CD4-positive, alpha-beta T cell (primary cell): ENCODE measurements at regions of chr11 and their contacts with region 1.

Region 1: DNA sequence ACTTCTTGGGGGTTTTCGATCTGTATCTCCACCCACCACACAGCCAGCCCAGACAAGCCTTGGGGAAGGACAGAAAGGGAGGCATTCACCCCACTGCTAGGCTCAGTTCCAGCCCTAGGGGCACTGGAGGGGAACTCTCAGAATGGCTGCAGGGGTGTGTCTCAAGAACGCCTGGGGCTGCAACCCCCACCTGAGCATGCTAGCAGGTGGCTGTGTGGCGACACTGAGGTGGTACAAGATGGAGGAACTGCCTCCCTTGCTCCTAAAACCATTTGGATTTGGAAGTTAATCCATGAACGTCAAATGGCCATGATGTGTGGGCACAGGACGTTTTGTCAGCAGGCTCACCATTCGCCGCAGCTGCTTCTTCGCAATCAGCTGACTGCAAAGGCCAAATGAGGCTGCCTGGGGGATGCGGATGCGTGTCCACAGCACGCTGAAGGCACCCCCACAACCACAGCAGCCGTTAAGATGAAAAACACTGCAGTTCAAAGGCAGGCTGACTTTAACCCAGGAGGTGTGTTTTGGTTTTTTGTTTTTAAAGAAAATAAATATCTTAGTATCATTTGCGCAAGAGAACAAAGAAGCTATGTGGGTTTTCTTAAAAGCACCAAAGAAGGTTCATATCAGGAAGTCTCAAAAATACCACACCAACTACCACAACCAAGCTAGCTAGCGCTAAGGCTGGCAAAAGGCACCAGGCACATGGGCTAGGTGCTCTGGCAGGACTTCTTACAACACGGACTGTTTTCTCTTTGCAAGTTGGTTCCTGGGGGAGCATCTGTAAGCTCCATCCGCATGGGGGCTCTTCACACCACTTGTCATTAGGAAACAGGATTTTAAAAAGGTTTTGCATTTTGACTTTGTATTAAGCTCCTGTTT is 22.2 kb upstream of the NAP1L4 start:
- DNase-seq: peak; percentile 64 to 92 (median 78)
- ATAC-seq: peak; percentile 86
- H3K4me3 ChIP-seq: peak overlapping the region; percentile 25
- H3K4me3 Mint-ChIP-seq: peak overlapping the region; percentile 66
- H3K27ac ChIP-seq: peak overlapping the region; percentile 21 to 48
- H3K27ac Mint-ChIP-seq: peak overlapping the region; percentile 93
- H3K4me1 ChIP-seq: peaks cover 87% of the 10 kb centered on the region
- H3K4me1 Mint-ChIP-seq: peaks cover 33% of the 10 kb centered on the region
- H3K27me3 ChIP-seq: no peaks in the 10 kb centered on the region
- H3K27me3 Mint-ChIP-seq: no peaks in the 10 kb centered on the region
- CTCF ChIP-seq: no peak

Region 2: DNA sequence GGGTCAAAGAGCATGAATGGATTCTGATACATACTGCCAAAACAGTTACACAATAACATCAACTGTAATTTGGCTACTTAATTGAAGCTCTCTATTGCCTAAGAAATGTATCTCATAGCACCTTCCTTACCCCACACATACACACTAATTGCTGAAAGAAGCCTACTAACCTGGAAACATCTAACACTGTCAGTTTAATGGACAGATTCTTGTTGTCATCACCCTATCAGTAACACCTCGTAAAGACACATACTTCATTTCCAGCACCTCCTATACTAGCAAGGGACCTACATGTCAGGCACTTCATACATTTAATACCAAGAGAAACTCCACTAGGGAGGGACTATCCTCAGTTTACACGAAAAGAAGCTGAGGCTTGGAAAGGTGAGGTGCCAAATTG is 32.1 kb before region 1 on chr11:
- CTCF ChIA-PET with region 1: interaction called, 6 read pairs
- POLR2A ChIA-PET with region 1: interaction called, 15 read pairs
- intact Hi-C with region 1: no loop called
- DNase-seq: no peak
- ATAC-seq: no peak
- H3K4me3 ChIP-seq: no peak overlapping the region
- H3K4me3 Mint-ChIP-seq: peak overlapping the region; percentile 7
- H3K27ac ChIP-seq: no peak overlapping the region
- H3K27ac Mint-ChIP-seq: peak overlapping the region; percentile 82
- H3K4me1 ChIP-seq: peaks cover 59% of the 10 kb centered on the region
- H3K4me1 Mint-ChIP-seq: peaks cover 57% of the 10 kb centered on the region
- H3K27me3 ChIP-seq: no peaks in the 10 kb centered on the region
- H3K27me3 Mint-ChIP-seq: no peaks in the 10 kb centered on the region
- CTCF ChIP-seq: no peak

Region 3: GRCh38 chr11:2998073-2998850 is 16.0 kb before region 1 on chr11:
- CTCF ChIA-PET with region 1: interaction called, 3 read pairs
- POLR2A ChIA-PET with region 1: interaction called, 9 read pairs
- intact Hi-C with region 1: loop called in 1 of 2 experiments (anchors 2 kb)
- DNase-seq: no peak
- ATAC-seq: no peak
- H3K4me3 ChIP-seq: no peak overlapping the region
- H3K4me3 Mint-ChIP-seq: no peak overlapping the region
- H3K27ac ChIP-seq: no peak overlapping the region
- H3K27ac Mint-ChIP-seq: no peak overlapping the region
- H3K4me1 ChIP-seq: no peaks in the 10 kb centered on the region
- H3K4me1 Mint-ChIP-seq: no peaks in the 10 kb centered on the region
- H3K27me3 ChIP-seq: no peaks in the 10 kb centered on the region
- H3K27me3 Mint-ChIP-seq: no peaks in the 10 kb centered on the region
- CTCF ChIP-seq: no peak

Region 4: GRCh38 chr11:3057069-3057963 is 43.0 kb after region 1 on chr11 and contains the start of gene CARS1:
- CTCF ChIA-PET with region 1: no interaction called
- POLR2A ChIA-PET with region 1: interaction called, 11 read pairs
- intact Hi-C with region 1: loop called (anchors 1 to 2 kb)
- DNase-seq: peak; percentile 82 to 97 (median 91)
- ATAC-seq: peak; percentile 99
- H3K4me3 ChIP-seq: peak within 1 kb of the TSS; percentile 83
- H3K4me3 Mint-ChIP-seq: peak within 1 kb of the TSS; percentile 91
- H3K27ac ChIP-seq: peak within 1 kb of the TSS; percentile 63 to 73
- H3K27ac Mint-ChIP-seq: peak within 1 kb of the TSS; percentile 75
- H3K4me1 ChIP-seq: peaks cover 48% of the 10 kb centered on the region
- H3K4me1 Mint-ChIP-seq: peaks cover 37% of the 10 kb centered on the region
- H3K27me3 ChIP-seq: no peaks in the 10 kb centered on the region
- H3K27me3 Mint-ChIP-seq: no peaks in the 10 kb centered on the region
- CTCF ChIP-seq: no peak
- total RNA-seq, gene CARS1: 24.1 to 25.2 TPM